ENCODE measurements at regions of chr18 and their contacts with region 1.

Region 1: DNA sequence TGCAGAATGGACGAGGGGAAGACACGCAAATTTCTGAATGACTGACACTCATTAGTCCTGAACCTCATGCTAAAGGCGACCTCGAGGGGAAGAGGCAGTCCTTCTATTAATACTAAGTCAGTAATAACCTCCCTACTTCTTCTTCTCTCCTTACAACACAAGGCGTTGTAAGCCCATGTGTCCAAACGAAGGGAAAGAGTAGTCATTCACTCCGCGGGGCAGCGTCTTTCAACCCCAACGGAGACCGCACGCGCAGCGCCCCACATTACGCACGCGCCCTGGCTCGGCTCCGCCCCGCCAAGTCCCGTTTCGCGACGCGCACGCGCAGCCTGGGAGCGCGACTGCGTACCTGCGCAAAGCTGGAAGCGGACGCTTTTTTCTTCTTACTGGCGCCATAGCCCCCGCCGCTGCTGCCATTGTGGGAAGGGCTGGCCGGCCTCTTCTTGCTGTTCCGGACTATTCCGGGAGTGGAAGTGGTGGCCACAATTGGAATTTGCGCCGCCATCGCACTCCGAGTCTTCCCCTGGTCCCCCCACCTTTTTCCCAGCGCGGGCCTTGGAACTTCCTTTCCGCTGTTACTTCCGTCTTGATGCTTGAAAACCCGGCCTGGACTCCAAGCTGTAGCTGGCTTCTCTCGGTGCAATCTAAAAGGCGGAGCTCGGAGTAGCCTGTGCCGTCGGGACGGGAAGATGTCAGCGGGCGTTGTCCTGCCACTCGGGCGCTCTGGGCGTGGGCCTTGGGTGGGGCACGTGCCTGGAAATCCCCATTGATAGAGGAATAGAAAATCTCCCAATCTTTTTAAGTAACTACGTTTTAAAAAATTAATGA is at the start of gene INO80C:
- DNase-seq: peak; percentile 94
- H3K4me3 ChIP-seq: peak within 1 kb of the TSS; percentile 59 to 84 (median 70)
- H3K27ac ChIP-seq: peak within 1 kb of the TSS; percentile 87
- H3K4me1 ChIP-seq: peaks cover 31% of the 10 kb centered on the region
- H3K27me3 ChIP-seq: no peaks in the 10 kb centered on the region
- CTCF ChIP-seq: no peak
- total RNA-seq, gene INO80C: 7.2 to 46.5 TPM

Region 2: GRCh38 chr18:35397976-35398375 is 99.6 kb before region 1 on chr18:
- CTCF ChIA-PET with region 1: no interaction called
- dilution Hi-C with region 1: no loop called
- in situ Hi-C with region 1: no loop called
- intact Hi-C with region 1: no loop called
- DNase-seq: no peak
- H3K4me3 ChIP-seq: no peak overlapping the region
- H3K27ac ChIP-seq: no peak overlapping the region
- H3K4me1 ChIP-seq: no peaks in the 10 kb centered on the region
- H3K27me3 ChIP-seq: no peaks in the 10 kb centered on the region
- CTCF ChIP-seq: no peak

Region 3: DNA sequence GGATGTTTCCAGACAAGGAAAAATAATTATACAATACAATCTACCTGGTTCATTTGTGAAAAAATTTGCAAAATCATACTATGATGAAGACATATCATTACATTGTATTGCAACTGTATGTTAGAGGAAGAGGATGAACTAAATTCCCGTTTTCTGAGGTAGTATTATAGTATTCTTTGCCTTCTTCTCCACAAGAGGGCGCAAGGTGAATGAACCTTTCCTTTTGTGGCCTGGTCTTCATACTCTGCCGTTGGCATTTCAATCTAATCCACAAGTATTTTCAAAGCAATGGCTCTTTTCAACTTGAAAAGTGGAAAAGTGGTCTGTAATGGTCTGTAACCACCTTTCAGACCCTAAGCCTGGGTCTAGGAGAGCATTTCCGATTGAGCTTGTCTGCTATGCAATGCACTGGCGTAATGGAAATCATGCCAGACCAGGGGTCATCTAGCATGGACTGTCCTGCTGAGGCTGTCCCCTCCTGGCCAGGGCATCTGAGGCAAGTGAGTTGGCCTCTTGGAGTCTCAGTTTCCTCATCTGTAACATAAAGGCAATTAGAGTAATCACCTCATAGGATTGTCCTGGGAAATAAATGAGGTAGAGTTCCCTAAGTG is 89.6 kb before region 1 on chr18:
- CTCF ChIA-PET with region 1: no interaction called
- dilution Hi-C with region 1: no loop called
- in situ Hi-C with region 1: no loop called
- intact Hi-C with region 1: loop called (anchors 1 kb)
- DNase-seq: peak; percentile 66
- H3K4me3 ChIP-seq: no peak overlapping the region
- H3K27ac ChIP-seq: no peak overlapping the region
- H3K4me1 ChIP-seq: peaks cover 40% of the 10 kb centered on the region
- H3K27me3 ChIP-seq: no peaks in the 10 kb centered on the region
- CTCF ChIP-seq: peak; percentile 69 to 81

Region 4: GRCh38 chr18:35415511-35416073 is 82.0 kb before region 1 on chr18:
- CTCF ChIA-PET with region 1: no interaction called
- dilution Hi-C with region 1: no loop called
- in situ Hi-C with region 1: no loop called
- intact Hi-C with region 1: loop called (anchors 1 kb)
- DNase-seq: no peak
- H3K4me3 ChIP-seq: no peak overlapping the region
- H3K27ac ChIP-seq: no peak overlapping the region
- H3K4me1 ChIP-seq: peaks cover 16% of the 10 kb centered on the region
- H3K27me3 ChIP-seq: no peaks in the 10 kb centered on the region
- CTCF ChIP-seq: no peak

Region 5: DNA sequence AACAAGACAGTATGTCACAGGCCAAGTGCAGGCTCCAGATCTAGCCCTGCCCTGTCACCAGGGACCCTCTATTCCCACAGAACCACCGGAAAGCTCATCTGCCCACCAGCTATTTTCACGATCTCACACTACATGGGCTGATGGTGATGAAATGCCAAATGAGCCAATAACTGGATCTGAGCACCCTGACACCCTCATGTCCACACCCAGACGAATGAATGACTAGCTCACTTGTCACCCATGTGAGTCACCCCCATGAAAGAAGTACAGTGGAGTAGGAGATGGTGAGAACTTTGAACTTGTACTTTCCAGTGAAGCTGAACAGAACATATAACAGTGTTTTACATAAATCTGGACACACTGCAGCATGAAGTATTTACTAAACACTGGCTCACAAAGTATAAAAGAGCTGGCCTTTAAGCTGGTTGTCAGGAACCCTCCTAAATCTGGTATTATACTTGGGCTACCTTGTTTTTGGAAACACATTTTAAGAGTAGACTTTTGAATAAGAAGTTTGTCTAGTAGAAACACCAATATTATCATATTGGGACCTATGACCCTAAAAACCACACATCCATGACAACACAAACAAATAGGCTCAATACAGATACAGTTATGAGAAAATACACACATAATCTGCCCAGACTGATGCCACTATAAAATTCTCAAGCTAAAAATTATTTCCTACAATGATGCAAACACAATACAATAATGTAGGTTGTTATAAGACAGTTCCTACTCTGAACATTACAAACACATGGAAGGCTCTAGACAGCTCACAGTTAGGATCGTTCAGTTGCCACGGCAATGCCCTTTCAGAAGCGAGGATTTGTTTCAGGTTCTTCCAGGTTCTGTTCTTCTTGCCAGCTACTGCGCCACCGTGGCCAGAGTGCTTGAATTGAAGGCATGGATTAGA is 18.8 kb before region 1 on chr18:
- CTCF ChIA-PET with region 1: no interaction called
- dilution Hi-C with region 1: no loop called
- in situ Hi-C with region 1: no loop called
- intact Hi-C with region 1: loop called (anchors 1 kb)
- DNase-seq: peak; percentile 100
- H3K4me3 ChIP-seq: peak overlapping the region; percentile 46 to 65 (median 63)
- H3K27ac ChIP-seq: peak overlapping the region; percentile 100
- H3K4me1 ChIP-seq: peaks cover 37% of the 10 kb centered on the region
- H3K27me3 ChIP-seq: no peaks in the 10 kb centered on the region
- CTCF ChIP-seq: peak in 1 of 2 donors; percentile 5

Region 6: DNA sequence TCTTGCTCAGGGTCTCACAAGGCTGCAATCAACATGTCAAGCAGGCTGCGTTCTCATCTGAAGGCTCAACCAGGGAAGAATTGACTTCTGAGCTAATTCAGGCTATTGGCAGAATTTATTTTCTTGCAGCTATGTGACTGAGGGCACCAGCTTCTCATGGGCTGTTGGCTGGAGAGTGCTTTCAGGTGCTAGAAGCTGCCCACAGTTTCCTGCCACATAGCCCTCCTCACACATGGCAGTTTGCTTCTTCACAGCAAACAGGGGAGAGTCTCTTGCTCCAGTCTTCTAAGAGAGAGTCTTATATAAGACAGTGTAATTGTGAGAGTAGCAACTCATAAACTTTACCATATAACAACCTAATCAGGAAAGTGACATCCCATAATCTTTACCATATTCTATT is 37.7 kb after region 1 on chr18:
- CTCF ChIA-PET with region 1: no interaction called
- dilution Hi-C with region 1: no loop called
- in situ Hi-C with region 1: no loop called
- intact Hi-C with region 1: no loop called
- DNase-seq: no peak
- H3K4me3 ChIP-seq: no peak overlapping the region
- H3K27ac ChIP-seq: no peak overlapping the region
- H3K4me1 ChIP-seq: no peaks in the 10 kb centered on the region
- H3K27me3 ChIP-seq: no peaks in the 10 kb centered on the region
- CTCF ChIP-seq: no peak

Region 7: DNA sequence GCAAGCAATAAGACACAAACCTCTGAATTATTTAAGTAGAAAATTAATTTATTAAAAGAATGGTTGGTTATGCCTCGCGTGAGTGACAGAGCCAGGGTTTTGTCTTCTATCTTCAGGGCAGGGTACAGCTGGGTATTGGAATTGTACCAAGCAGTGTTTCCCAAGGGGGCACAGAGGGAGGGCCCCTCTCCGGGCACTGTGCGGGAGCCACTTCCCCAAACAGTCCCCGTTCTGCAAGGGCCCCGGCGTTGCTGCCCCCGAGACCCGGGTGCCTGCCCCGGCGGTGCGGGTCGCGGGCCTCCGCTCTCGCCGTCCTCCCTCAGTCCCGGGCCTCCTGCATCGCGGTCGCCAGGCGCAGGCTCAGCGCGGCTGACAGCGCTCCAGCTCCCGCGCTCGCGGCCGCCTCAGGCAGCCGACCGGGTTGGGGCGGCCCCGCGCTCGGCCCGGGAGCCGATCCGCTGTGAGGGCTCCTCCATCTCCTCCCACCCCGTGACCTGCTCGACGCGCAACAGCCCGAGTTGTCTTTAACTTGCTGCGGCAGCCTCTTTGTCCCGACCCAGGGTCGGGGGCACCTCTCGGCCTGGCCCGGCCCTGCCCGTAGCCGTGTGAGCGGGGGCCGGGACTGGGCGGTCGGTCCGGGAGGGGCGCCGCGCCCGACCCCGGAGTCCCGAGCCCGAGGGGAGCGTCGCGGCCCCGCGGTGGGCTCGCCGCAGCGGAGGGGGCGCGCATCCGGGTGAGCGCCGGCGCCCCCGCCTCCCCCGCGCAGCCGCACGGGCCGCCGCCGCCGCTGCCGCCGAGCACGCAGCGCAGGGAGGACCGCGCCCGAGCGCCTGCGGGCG is 83.3 kb after region 1 on chr18:
- CTCF ChIA-PET with region 1: no interaction called
- dilution Hi-C with region 1: loop called (anchors 5 kb)
- in situ Hi-C with region 1: no loop called
- intact Hi-C with region 1: loop called (anchors 5 kb)
- DNase-seq: peak; percentile 58
- H3K4me3 ChIP-seq: peak overlapping the region; percentile 65 to 77 (median 69)
- H3K27ac ChIP-seq: peak overlapping the region; percentile 55
- H3K4me1 ChIP-seq: peaks cover 9% of the 10 kb centered on the region
- H3K27me3 ChIP-seq: no peaks in the 10 kb centered on the region
- CTCF ChIP-seq: no peak